ENCODE measurements at regions of chr22 and their contacts with region 1.

Region 1: GRCh38 chr22:21001560-21002325 is at the start of gene THAP7:
- DNase-seq: peak; percentile 91 to 98 (median 96)
- H3K4me3 ChIP-seq: peak within 1 kb of the TSS; percentile 55 to 100 (median 87)
- H3K27ac ChIP-seq: peak within 1 kb of the TSS; percentile 82 to 100 (median 98)
- H3K27me3 ChIP-seq: no peaks in the 10 kb centered on the region
- CTCF ChIP-seq: peak in 31 of 56 donors; percentile 5 to 62 (median 20)
- total RNA-seq, gene THAP7: 17.9 to 37.3 (median 26.6) TPM

Region 2: GRCh38 chr22:20116951-20117645 is 884.6 kb before region 1 on chr22 and contains the start of gene TRMT2A:
- intact Hi-C with region 1: loop called in 1 of 2 experiments (anchors 5 kb)
- DNase-seq: peak; percentile 95 to 99 (median 96)
- H3K4me3 ChIP-seq: peak within 1 kb of the TSS; percentile 50 to 98 (median 87)
- H3K27ac ChIP-seq: peak within 1 kb of the TSS; percentile 20 to 96 (median 84)
- H3K27me3 ChIP-seq: no peaks in the 10 kb centered on the region
- CTCF ChIP-seq: peak in 44 of 56 donors; percentile 8 to 63 (median 36)
- total RNA-seq, gene TRMT2A: 33.1 to 73.3 (median 50.4) TPM

Region 3: DNA sequence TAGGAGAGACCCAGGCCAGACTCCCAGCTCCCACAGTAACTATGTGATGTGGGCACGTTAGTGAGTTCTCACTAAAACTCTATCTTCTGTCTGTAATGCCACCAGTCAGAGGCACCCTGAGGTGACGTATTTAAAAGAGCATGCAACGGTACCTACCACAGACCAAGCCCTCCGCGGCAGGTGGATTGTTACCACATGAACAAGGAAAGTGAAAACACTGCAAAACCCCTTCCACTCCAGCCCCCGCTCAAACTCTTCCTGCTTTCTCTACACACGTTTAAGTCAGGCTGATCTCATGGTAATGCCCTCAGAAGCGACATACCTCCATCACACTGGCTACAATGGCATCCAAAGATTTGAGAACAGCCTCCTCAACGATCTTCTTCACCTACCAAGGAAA is 191.1 kb before region 1 on chr22:
- intact Hi-C with region 1: no loop called
- DNase-seq: peak in 1 of 10 donors; percentile 15
- H3K4me3 ChIP-seq: no peak overlapping the region
- H3K27ac ChIP-seq: peak overlapping the region in 25 of 59 donors; percentile 11 to 66 (median 37)
- H3K27me3 ChIP-seq: no peaks in the 10 kb centered on the region
- CTCF ChIP-seq: no peak

Region 4: DNA sequence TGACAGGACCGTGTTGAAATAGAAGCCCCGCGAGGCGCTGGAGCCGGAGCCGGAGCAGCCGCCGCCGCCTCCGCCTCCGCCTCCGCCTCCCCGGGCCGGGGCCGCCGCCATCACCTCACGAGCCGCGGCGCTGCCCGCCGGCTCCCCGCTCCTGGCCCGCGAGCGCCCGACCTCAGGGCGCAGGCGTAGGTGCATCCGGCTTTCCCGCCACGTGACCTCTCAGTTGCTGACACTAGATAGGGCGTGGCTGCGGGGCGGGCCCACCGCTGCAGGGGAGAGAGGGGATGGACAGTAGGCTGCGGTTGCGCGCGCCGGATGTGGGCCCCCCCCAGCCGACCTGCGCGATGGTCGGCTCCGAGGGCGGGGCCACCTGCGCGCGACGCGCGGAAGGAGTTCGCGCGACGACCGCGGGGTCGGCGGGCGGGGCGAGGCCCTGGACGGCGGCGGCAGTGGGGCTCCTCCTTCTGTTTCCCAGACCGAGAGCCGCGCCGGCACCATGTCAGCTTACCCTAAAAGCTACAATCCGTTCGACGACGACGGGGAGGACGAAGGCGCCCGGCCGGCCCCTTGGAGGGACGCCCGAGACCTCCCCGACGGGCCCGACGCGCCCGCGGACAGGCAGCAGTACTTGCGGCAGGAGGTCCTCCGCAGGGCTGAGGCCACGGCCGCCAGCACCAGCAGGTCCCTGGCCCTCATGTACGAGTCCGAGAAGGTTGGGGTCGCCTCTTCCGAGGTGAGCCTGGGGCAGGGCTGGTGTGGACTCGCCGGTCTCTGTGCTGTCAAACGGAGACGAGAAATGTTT is 142.9 kb before region 1 on chr22 and contains the starts of genes PI4KA and SNAP29:
- intact Hi-C with region 1: loop called in 1 of 2 experiments (anchors 5 kb)
- DNase-seq: peak; percentile 97 to 99 (median 98)
- H3K4me3 ChIP-seq: peak within 1 kb of the TSS; percentile 75 to 99 (median 94)
- H3K27ac ChIP-seq: peak within 1 kb of the TSS; percentile 59 to 98 (median 89)
- H3K27me3 ChIP-seq: no peaks in the 10 kb centered on the region
- CTCF ChIP-seq: peak in 22 of 56 donors; percentile 10 to 64 (median 22)
- total RNA-seq, gene PI4KA: 211 to 601 (median 463) TPM
- total RNA-seq, gene SNAP29: 16.5 to 33.5 (median 23.5) TPM

Region 5: DNA sequence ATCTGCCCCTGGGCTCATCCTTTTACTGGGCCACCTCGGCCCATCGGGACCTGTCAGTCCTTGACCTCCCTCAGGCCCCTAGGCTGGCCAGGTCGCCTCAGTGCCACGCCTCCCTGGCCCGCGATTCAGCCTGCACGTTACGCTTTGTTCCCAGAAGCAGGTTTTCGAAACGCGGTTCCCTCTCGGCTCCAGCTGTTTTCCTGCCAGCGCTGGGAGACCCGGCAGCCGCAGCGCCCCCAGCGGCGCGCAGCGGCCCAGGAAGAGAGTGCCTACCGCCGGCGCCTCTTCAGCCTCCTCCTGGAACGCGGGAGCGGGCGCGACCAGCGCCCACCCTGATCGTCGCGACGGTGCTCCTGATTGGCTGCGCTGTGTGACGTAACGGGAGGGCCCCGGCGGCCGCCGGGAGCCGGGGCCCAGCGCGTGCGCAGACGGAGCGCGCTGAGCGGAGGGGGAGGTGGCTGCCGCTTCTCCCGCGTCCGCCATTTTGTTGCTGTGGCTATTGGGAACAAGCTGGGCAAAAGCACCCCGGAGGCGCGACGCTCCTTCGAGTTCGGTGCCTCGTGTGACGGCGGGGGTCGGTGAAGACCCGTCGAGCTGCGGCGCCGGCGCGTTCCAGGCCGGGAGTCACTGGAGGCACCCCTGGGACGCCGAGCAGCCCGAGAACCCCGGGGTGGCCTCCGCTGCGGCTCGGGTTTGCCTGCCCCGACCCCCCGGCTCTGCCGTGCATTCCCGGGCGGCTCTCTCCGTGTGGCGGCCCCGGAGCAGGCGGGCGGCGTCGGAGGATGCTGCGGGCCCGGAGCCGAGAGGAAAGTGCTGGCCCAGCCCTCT is 84.5 kb before region 1 on chr22 and contains the start of gene CRKL:
- intact Hi-C with region 1: loop called (anchors 5 kb)
- DNase-seq: peak; percentile 90 to 98 (median 96)
- H3K4me3 ChIP-seq: peak within 1 kb of the TSS; percentile 64 to 100 (median 97)
- H3K27ac ChIP-seq: peak within 1 kb of the TSS; percentile 26 to 99 (median 96)
- H3K27me3 ChIP-seq: no peaks in the 10 kb centered on the region
- CTCF ChIP-seq: peak; percentile 75 to 99 (median 93)
- total RNA-seq, gene CRKL: 75.1 to 125 (median 94.5) TPM

Region 6: DNA sequence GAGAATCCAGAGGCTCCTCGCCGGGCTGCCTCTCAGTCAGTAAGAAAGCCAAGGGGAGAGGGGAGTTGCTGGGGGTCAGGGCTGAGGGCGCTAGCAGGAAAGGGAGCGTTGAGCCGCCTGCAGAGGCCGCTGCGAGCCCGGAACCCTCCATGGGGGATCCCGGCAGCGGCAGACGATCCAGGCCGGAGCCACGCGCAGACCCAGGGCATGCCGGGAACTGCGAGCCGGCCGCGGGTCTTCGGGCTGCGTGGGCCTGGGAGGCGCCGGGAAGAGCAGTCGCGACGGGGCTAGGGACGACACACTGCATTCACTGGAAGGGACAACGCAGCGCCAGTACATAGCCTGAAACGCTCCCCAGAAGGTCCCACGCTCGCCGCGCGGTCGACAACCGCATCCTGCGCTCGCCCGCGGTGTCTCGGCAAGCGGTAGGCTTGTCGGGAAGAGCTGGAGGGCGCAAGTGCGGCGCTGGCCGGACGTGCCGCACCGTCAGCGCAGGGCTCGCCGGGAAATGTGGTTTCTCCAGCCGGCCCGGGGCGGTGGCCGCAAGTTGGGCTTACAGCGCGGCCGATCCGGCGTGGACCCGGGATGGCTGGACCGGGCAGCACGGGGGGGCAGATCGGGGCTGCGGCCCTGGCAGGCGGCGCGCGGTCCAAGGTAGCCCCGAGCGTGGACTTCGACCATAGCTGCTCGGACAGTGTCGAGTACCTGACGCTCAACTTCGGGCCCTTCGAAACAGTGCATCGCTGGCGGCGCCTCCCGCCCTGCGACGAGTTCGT is 19.8 kb before region 1 on chr22 and contains the start of gene LZTR1:
- intact Hi-C with region 1: loop called (anchors 1 to 2 kb)
- DNase-seq: peak; percentile 75 to 93 (median 85)
- H3K4me3 ChIP-seq: peak within 1 kb of the TSS; percentile 69 to 99 (median 90)
- H3K27ac ChIP-seq: peak within 1 kb of the TSS; percentile 76 to 99 (median 96)
- H3K27me3 ChIP-seq: no peaks in the 10 kb centered on the region
- CTCF ChIP-seq: peak; percentile 31 to 84 (median 63)
- total RNA-seq, gene LZTR1: 48.3 to 115 (median 73.6) TPM

Region 7: DNA sequence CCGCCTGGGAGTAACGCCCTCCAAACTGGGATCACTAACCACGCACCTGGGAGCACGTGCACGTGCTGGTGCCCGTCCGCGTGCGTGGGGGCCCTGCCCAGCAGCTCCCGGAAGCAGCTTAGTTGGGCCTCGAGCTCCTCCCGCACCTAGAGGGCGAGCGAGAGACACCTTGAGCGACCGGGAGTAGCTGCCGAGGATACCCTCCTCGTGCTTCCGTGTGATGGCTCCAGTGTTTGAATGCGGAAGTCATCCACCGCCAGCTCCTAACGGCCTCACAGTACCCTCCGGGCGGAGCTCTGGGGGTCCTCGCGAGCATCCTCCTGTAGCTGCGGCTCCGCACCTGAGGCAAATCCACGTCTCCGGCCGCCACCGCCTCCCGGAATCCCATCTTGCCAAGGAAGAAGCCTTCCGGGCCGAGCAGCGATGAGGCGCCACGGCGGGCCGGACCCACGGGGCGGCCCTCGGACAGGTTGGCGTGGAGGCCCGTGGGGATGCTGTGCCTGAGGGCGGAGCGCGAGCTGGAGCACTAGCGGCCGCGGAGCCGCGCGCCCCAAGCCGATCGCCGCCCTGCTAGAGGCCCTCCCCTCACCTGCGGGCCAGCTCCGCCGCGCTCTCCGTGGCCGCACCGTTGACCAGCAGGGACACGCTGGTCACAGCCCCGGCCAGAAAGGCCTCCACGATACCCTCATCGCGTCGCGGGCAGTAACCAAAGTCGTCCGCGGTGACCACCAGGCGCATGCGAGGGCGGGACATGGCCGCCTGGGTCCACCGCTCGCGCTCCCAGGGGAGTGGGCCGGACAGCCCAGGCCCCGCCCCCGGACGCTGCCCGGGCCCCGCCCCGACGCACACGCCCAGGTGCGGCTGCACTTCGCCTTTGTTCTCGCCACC is 627.8 kb after region 1 on chr22 and contains the start of gene YDJC:
- intact Hi-C with region 1: loop called in 1 of 2 experiments (anchors 10 kb)
- DNase-seq: peak; percentile 46 to 95 (median 91)
- H3K4me3 ChIP-seq: peak within 1 kb of the TSS; percentile 56 to 96 (median 88)
- H3K27ac ChIP-seq: peak within 1 kb of the TSS in 48 of 59 donors; percentile 1 to 88 (median 62)
- H3K27me3 ChIP-seq: no peaks in the 10 kb centered on the region
- CTCF ChIP-seq: peak in 42 of 56 donors; percentile 8 to 98 (median 48)
- total RNA-seq, gene YDJC: 9.3 to 19.5 (median 14.6) TPM